ENCODE measurements at regions of chr15 and their contacts with region 1.

Region 1: DNA sequence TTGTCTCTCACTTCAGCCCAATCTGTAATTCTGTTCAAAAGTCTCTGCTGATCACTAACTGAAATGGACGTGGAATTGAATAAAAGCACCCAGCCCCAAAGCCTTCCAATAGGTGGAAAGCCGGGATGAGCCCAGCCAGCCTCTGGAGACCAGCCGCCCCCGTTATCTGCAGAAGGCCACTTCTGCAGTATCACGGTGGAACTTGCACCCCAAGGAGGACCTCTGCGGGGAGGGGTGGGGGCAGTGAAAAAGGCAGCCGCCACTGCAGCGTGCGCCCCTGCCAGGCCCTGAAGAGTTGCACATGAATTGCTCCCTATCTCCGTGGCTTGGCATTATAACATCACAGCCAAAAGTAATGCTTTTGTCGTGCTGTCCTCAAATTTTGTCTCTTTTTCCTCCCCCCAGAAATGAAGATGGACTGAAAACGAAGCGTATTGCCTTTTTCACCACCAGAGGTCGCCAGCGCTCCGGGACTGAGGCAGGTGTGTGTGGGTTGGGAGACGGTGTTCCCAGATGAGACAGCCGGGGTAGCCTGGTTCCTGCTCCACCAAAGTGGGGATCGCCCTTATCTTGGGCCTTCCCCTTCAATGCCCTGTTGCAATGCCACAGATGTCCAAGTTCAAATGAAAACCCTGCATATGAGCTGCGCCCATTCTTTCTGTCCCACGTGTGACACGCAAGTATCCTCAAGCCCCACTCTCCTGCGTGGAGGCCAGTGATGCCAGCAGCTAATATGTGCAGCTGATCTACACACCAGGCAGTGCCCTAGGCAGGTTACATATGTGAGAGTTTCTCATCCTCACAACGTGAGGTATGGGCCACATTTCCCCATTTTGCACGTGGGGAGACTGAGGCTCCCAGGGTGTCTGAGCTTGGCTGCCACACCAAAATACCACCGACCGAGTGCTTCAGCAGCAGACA is 96.0 kb downstream of the LRRK1 start:
- DNase-seq: peak; percentile 84
- ATAC-seq: peak; percentile 58
- H3K4me3 Mint-ChIP-seq: no peak overlapping the region
- H3K27ac Mint-ChIP-seq: no peak overlapping the region
- H3K4me1 Mint-ChIP-seq: no peaks in the 10 kb centered on the region
- H3K27me3 Mint-ChIP-seq: peaks cover 2% of the 10 kb centered on the region

Region 2: DNA sequence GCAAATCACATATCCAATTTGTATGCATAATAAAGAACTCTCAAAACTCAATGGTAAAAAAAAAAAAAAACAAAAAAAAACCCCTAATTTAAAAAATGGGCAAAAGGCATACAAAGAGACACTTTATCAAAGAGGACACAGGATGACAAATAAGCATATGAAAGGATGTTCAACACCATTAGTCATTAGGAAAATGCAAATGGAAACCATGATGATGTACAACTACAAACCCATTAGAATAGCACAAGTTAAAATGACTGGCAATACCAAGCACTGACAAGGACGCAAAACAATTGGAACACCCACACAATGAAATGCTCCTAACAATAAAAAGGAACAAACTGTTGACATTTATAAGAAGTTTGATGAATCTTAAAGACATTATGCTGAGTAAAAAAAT is 610.0 kb before region 1 on chr15:
- CTCF ChIA-PET with region 1: no interaction called
- POLR2A ChIA-PET with region 1: no interaction called
- intact Hi-C with region 1: no loop called
- DNase-seq: no peak
- ATAC-seq: peak; percentile 57
- H3K4me3 Mint-ChIP-seq: no peak overlapping the region
- H3K27ac Mint-ChIP-seq: no peak overlapping the region
- H3K4me1 Mint-ChIP-seq: no peaks in the 10 kb centered on the region
- H3K27me3 Mint-ChIP-seq: no peaks in the 10 kb centered on the region

Region 3: DNA sequence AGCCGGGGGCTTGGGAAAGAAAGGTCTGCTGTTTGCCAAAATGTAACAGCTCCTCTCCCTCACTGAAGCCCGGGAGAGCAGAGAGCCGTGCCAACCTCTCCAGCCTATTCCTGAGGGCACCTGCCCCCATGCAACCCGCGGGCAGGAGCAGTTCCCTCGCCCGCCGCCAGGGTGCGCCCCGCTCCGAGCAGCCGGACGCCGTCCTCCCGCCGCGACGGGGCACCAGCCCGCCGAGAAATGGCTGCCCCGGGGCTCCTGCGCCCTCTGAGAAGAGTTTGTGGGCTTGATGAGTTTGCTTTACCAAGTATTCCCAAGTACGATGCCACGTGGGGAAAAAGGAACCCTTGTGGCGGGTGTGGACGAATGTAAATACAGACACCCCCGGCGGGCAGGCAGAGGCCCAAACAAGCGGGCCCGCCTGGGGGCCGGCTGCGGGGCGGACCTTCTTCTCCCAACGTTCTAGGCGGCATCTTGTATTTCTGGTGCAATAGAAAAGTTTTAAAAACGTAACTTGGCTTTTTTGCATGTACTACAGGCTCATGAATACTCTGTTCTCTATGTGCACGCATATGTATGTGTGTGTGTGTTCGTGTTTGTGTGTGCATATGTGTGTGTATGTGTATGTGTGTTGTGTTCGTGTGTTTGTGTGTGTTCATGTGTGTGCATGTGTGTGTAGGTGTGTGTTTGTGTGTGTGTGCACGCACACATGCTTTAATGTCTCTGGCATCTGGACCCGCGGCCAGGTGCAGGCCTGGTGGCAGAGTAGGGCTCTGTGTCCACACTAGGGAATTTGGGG is 73.8 kb after region 1 on chr15:
- CTCF ChIA-PET with region 1: interaction called, 4 read pairs
- POLR2A ChIA-PET with region 1: no interaction called
- intact Hi-C with region 1: loop called (anchors 2 to 5 kb)
- DNase-seq: peak; percentile 89
- ATAC-seq: peak; percentile 96
- H3K4me3 Mint-ChIP-seq: no peak overlapping the region
- H3K27ac Mint-ChIP-seq: no peak overlapping the region
- H3K4me1 Mint-ChIP-seq: no peaks in the 10 kb centered on the region
- H3K27me3 Mint-ChIP-seq: no peaks in the 10 kb centered on the region

Region 4: DNA sequence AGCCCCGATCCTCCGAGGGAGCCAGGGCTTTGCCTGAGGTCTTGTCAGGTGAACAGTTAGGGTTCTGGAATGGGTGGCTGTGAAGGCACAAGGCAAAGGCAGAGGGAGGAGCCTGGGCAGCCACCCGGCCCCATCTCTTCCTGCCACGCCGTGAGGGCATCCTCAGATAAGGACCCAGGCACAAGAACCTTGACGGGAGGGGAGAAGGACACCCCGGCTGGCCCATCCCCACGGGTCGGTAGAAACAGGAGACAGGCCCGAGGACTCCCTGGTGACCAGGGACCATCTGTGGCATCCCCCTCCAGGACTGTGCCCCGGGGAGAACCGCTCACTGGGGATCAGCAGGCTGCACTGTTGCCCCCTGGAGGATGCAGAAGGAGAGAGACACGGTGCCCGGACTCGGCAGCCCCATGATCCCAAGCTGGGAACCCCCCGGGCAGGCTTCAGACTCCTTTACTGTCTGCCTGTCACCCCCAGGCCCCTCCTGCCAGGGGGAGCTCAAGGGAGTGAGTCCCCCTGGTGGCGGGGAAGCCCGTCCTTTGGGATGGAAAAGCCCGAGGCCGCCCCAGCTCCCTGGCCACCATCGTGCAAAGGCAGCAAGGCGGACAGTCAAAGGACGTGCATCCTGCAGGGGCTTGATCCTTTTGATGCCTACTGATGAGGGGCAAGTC is 486.7 kb after region 1 on chr15:
- CTCF ChIA-PET with region 1: no interaction called
- POLR2A ChIA-PET with region 1: no interaction called
- intact Hi-C with region 1: loop called in 1 of 2 experiments (anchors 5 kb)
- DNase-seq: peak; percentile 75
- ATAC-seq: peak; percentile 94
- H3K4me3 Mint-ChIP-seq: peak overlapping the region; percentile 21
- H3K27ac Mint-ChIP-seq: no peak overlapping the region
- H3K4me1 Mint-ChIP-seq: peaks cover 14% of the 10 kb centered on the region
- H3K27me3 Mint-ChIP-seq: peaks cover 21% of the 10 kb centered on the region